Naive thymus-derived CD4-positive, alpha-beta T cell (primary cell): ENCODE measurements at regions of chr6 and their contacts with region 1.

Region 1: GRCh38 chr6:47413752-47414422 is 63.7 kb upstream of the CD2AP start:
- DNase-seq: peak in 7 of 9 donors; percentile 25 to 70 (median 62)
- ATAC-seq: peak; percentile 94
- H3K4me3 ChIP-seq: peak overlapping the region; percentile 57
- H3K4me3 Mint-ChIP-seq: peak overlapping the region; percentile 76 to 94 (median 84)
- H3K27ac ChIP-seq: peak overlapping the region; percentile 54
- H3K27ac Mint-ChIP-seq: peak overlapping the region; percentile 28 to 90 (median 86)
- H3K4me1 ChIP-seq: peaks cover 3 to 8% of the 10 kb centered on the region in 2 donors
- H3K4me1 Mint-ChIP-seq: peaks cover 6 to 29% (median 16%) of the 10 kb centered on the region in 7 donors
- H3K27me3 ChIP-seq: no peaks in the 10 kb centered on the region
- H3K27me3 Mint-ChIP-seq: peaks cover 0 to 11% (median 0%) of the 10 kb centered on the region in 5 donors

Region 2: GRCh38 chr6:47571488-47571887 is 157.6 kb after region 1 on chr6:
- CTCF ChIA-PET with region 1: no interaction called
- POLR2A ChIA-PET with region 1: no interaction called
- intact Hi-C with region 1: loop called in 1 of 2 experiments (anchors 5 kb)
- DNase-seq: no peak
- ATAC-seq: no peak
- H3K4me3 ChIP-seq: no peak overlapping the region
- H3K4me3 Mint-ChIP-seq: no peak overlapping the region
- H3K27ac ChIP-seq: no peak overlapping the region
- H3K27ac Mint-ChIP-seq: no peak overlapping the region
- H3K4me1 ChIP-seq: no peaks in the 10 kb centered on the region
- H3K4me1 Mint-ChIP-seq: peaks cover 0 to 9% (median 3%) of the 10 kb centered on the region in 7 donors
- H3K27me3 ChIP-seq: no peaks in the 10 kb centered on the region
- H3K27me3 Mint-ChIP-seq: no peaks in the 10 kb centered on the region

Region 3: DNA sequence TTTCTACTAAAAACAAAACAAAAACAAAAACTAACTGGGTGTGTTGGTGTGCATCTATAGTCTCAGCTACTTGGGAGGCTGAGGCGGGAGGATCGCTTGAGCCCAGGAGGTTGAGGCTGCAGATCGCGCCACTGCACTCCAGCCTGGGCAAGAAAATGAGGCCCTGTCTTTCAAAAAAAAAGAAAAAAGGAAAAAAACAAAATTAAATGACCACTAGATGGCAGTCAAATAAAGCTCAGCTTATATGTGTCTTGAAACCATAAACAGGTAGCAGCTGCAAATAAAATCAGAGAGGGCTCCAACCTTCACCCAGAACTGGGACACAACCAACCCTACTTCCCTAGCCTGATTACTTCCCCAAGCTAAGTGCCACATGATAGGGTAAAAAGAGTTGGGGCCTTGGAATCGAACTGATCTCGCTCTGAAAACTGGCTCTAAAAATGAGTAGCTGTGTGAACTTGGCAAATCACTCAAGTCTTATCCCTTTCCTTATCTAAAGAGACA is 217.4 kb after region 1 on chr6:
- CTCF ChIA-PET with region 1: interaction called, 5 read pairs
- POLR2A ChIA-PET with region 1: interaction called, 3 read pairs
- intact Hi-C with region 1: loop called (anchors 1 kb)
- DNase-seq: peak in 6 of 9 donors; percentile 20 to 60 (median 53)
- ATAC-seq: peak; percentile 64
- H3K4me3 ChIP-seq: no peak overlapping the region
- H3K4me3 Mint-ChIP-seq: no peak overlapping the region
- H3K27ac ChIP-seq: no peak overlapping the region
- H3K27ac Mint-ChIP-seq: peak overlapping the region in 8 of 9 donors; percentile 10 to 75 (median 48)
- H3K4me1 ChIP-seq: peaks cover 6 to 9% of the 10 kb centered on the region in 2 donors
- H3K4me1 Mint-ChIP-seq: peaks cover 7 to 28% (median 20%) of the 10 kb centered on the region in 7 donors
- H3K27me3 ChIP-seq: no peaks in the 10 kb centered on the region
- H3K27me3 Mint-ChIP-seq: no peaks in the 10 kb centered on the region

Region 4: DNA sequence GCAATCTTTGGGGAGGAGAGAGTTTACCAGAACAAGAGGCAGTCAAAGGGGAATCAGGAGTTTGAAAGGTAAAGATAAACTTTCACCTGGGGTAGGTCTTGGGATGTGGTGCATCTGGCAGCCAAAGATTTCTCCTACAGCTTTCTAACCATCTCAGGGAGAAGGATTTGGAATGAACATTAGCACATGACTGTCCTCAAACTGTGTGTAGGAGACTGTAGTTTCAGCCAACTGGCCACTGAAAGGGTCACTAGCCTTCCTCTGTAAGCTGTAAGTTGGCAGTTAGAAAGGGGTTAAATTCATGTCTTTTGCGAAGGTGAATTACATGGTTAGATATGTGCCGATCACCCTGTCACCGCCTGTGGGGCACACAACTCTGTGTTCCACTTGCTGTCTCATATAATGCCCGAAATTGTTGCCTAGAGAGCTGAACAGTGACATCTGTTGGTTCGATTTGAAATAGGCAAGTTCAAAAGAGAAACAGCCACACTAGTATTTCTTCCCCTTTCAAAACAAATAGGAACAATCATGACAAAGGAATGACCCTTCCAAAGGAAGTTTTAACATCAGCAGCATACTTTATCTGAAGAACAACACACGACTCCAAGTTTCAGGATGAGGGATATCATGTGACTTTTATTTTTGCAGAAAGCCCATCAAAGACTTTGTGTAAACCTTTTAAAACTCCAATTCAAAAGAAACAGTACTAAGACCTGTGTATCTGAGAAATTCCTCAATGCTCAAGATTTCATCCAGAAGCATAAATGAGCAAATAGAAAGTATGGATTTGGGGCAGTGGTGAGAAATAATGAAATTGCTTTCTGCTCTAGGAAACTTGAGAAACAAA is 366.8 kb after region 1 on chr6:
- CTCF ChIA-PET with region 1: interaction called, 12 read pairs
- POLR2A ChIA-PET with region 1: no interaction called
- intact Hi-C with region 1: loop called (anchors 1 kb)
- DNase-seq: peak in 7 of 9 donors; percentile 18 to 57 (median 41)
- ATAC-seq: peak; percentile 83
- H3K4me3 ChIP-seq: no peak overlapping the region
- H3K4me3 Mint-ChIP-seq: peak overlapping the region in 4 of 10 donors; percentile 6 to 47 (median 23)
- H3K27ac ChIP-seq: no peak overlapping the region
- H3K27ac Mint-ChIP-seq: peak overlapping the region in 2 of 9 donors; percentile 10 to 25
- H3K4me1 ChIP-seq: peaks cover 0 to 5% of the 10 kb centered on the region in 2 donors
- H3K4me1 Mint-ChIP-seq: peaks cover 0 to 11% (median 8%) of the 10 kb centered on the region in 7 donors
- H3K27me3 ChIP-seq: no peaks in the 10 kb centered on the region
- H3K27me3 Mint-ChIP-seq: peaks cover 0 to 44% (median 5%) of the 10 kb centered on the region in 5 donors

Region 5: GRCh38 chr6:48809245-48809644 is 1395.4 kb after region 1 on chr6:
- CTCF ChIA-PET with region 1: no interaction called
- POLR2A ChIA-PET with region 1: no interaction called
- intact Hi-C with region 1: no loop called
- DNase-seq: no peak
- ATAC-seq: no peak
- H3K4me3 ChIP-seq: no peak overlapping the region
- H3K4me3 Mint-ChIP-seq: no peak overlapping the region
- H3K27ac ChIP-seq: no peak overlapping the region
- H3K27ac Mint-ChIP-seq: no peak overlapping the region
- H3K4me1 ChIP-seq: no peaks in the 10 kb centered on the region
- H3K4me1 Mint-ChIP-seq: no peaks in the 10 kb centered on the region
- H3K27me3 ChIP-seq: no peaks in the 10 kb centered on the region
- H3K27me3 Mint-ChIP-seq: no peaks in the 10 kb centered on the region